ENCODE measurements at regions of chr21 and their contacts with region 1.

Region 1: DNA sequence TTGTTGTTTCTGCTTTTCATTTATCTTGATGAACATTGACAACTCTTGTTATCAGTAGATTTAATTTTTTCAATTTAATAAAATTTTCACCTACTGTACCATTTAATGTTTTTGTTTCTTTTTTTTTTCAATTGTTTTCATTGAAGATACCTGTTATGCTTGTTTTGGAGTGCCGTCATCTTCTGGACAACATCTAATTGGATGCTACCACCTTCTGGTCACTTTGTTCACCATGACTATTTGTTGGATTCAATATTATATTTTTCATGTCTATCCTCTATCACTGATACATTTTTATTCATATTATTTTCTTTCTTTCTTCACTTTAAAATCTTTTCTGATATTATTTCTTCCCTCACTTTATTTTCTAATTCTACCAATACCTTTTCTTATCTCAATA is 14.0 kb downstream of the KRTAP21-2 start:
- DNase-seq: no peak
- ATAC-seq: no peak
- H3K4me3 ChIP-seq: no peak overlapping the region
- H3K27ac ChIP-seq: no peak overlapping the region
- H3K4me1 ChIP-seq: no peaks in the 10 kb centered on the region
- H3K27me3 ChIP-seq: no peaks in the 10 kb centered on the region

Region 2: DNA sequence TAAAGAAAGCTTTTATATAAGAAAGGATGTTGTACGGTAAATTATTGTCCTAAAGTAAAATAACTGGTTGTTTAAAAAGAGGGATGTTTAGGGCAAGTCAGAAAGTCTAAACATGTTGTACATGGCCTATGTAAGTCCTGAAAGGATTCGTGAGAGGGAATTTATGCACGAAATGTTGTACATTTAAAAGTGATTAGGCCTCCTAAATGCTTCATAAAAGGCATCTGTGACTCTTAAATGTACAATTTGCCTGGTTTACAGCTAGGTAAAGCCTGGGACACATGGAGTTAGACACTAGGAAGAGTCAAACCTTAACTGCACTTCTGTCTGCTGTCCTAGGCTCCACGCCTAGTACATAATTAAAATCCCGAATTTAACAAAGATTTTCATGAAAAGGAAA is 317.0 kb before region 1 on chr21:
- intact Hi-C with region 1: no loop called
- DNase-seq: no peak
- ATAC-seq: no peak
- H3K4me3 ChIP-seq: no peak overlapping the region
- H3K27ac ChIP-seq: no peak overlapping the region
- H3K4me1 ChIP-seq: no peaks in the 10 kb centered on the region
- H3K27me3 ChIP-seq: no peaks in the 10 kb centered on the region

Region 3: GRCh38 chr21:30444204-30444603 is 288.8 kb before region 1 on chr21:
- intact Hi-C with region 1: loop called in 3 of 4 experiments (anchors 2 to 5 kb)
- DNase-seq: no peak
- ATAC-seq: peak; percentile 44 to 65
- H3K4me3 ChIP-seq: no peak overlapping the region
- H3K27ac ChIP-seq: no peak overlapping the region
- H3K4me1 ChIP-seq: no peaks in the 10 kb centered on the region
- H3K27me3 ChIP-seq: no peaks in the 10 kb centered on the region

Measured in right cardiac atrium (tissue), 5 donors.